ENCODE measurements at regions of chr11 and their contacts with region 1.

Region 1: GRCh38 chr11:3359092-3359824 is 19.7 kb downstream of the ZNF195 start:
- DNase-seq: no peak
- ATAC-seq: no peak
- H3K4me3 ChIP-seq: no peak overlapping the region
- H3K27ac ChIP-seq: no peak overlapping the region
- H3K4me1 ChIP-seq: no peaks in the 10 kb centered on the region
- H3K27me3 ChIP-seq: no peaks in the 10 kb centered on the region
- CTCF ChIP-seq: no peak

Region 2: GRCh38 chr11:3369366-3369765 is 10.1 kb after region 1 on chr11:
- CTCF ChIA-PET with region 1: no interaction called
- POLR2A ChIA-PET with region 1: no interaction called
- in situ Hi-C with region 1: no loop called
- intact Hi-C with region 1: loop called (anchors 1 kb)
- DNase-seq: no peak
- ATAC-seq: no peak
- H3K4me3 ChIP-seq: no peak overlapping the region
- H3K27ac ChIP-seq: no peak overlapping the region
- H3K4me1 ChIP-seq: no peaks in the 10 kb centered on the region
- H3K27me3 ChIP-seq: no peaks in the 10 kb centered on the region
- CTCF ChIP-seq: no peak

Region 3: DNA sequence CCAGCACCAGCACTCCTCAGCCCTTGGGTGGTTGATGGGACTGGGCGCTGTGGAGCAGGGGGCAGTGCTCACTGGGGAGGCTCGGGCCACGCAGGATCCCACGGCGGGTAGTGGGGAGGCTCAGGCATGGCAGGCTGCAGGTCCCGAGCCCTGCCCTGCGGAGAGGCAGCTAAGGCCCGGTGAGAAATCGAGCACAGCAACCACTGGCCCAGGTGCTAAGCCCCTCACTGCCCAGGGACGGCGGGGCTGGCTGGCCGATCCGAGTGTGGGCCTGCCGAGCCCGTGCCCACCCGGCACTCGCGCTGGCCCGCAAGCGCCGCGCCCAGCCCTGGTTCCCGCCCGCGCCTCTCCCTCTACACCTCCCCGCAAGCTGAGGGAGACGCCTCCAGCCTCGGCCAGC is 75.7 kb after region 1 on chr11:
- CTCF ChIA-PET with region 1: no interaction called
- POLR2A ChIA-PET with region 1: no interaction called
- in situ Hi-C with region 1: no loop called
- intact Hi-C with region 1: no loop called
- DNase-seq: no peak
- ATAC-seq: peak; percentile 66
- H3K4me3 ChIP-seq: no peak overlapping the region
- H3K27ac ChIP-seq: no peak overlapping the region
- H3K4me1 ChIP-seq: no peaks in the 10 kb centered on the region
- H3K27me3 ChIP-seq: no peaks in the 10 kb centered on the region
- CTCF ChIP-seq: no peak

Measured in Panc1 (cell line).